Vagina (tissue), 2 donors: ENCODE measurements at regions of chr1 and their contacts with region 1.

Region 1: GRCh38 chr1:204128964-204129896 is 22.6 kb downstream of the ETNK2 start:
- DNase-seq: no peak
- H3K4me3 ChIP-seq: peak overlapping the region; percentile 35 to 43
- H3K27ac ChIP-seq: peak overlapping the region; percentile 78
- H3K4me1 ChIP-seq: peaks cover 59% of the 10 kb centered on the region
- H3K27me3 ChIP-seq: no peaks in the 10 kb centered on the region
- CTCF ChIP-seq: peak; percentile 79 to 99 (median 93)
- POLR2A ChIP-seq: no peak

Region 2: GRCh38 chr1:203871107-203871875 is 257.9 kb before region 1 on chr1:
- intact Hi-C with region 1: loop called (anchors 2 kb)
- DNase-seq: no peak
- H3K4me3 ChIP-seq: no peak overlapping the region
- H3K27ac ChIP-seq: peak overlapping the region; percentile 73
- H3K4me1 ChIP-seq: peaks cover 17% of the 10 kb centered on the region
- H3K27me3 ChIP-seq: no peaks in the 10 kb centered on the region
- CTCF ChIP-seq: peak; percentile 73 to 94 (median 78)
- POLR2A ChIP-seq: no peak

Region 3: DNA sequence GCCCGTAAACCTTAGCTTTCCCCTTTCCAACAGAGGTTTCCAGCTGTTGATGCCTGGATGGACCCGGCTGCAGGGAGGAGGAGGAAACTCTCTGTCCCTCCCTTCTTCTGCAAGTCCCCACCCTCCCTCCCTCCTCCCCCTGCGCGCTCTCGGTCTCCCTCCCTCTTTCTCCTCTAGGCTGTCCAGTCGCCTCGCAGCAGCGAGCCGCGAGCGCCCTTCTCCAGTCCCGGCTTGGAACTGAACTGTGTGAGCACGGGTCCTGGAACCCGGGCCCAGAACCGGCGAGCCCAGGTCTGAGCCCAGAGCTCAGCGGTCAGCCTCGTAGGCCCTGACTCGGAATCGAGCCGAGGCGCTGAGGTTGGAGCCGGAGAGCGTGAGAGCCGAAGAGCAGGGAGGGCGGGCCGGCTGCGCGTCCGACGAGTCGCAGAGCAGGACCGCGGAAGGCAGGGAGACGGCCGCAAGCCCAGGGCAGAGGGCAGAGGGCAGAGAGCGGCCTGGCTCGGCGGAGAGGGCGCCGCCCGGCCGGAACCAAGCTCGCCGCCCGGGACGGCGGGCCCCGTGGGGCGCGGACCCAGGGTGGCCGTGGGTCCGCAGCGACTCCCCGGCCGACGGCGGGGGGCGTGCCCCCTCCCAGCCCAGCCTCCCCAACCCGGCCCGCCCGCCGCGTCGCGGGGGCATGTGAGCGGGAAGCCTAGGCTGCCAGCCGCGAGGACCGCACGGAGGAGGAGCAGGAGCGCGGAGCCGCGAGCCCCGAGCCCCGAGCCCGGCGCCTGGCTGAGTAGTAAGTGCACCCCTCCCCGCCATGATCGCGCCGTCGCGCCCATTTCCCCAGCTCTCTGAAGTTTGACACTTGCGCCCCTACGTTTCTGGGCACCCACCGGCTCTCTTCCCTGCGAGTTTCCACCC is 56.0 kb before region 1 on chr1 and contains the start of gene SOX13:
- intact Hi-C with region 1: loop called (anchors 1 kb)
- DNase-seq: peak in 1 of 2 donors; percentile 97
- H3K4me3 ChIP-seq: peak within 1 kb of the TSS; percentile 84 to 91
- H3K27ac ChIP-seq: peak within 1 kb of the TSS; percentile 97
- H3K4me1 ChIP-seq: peaks cover 38% of the 10 kb centered on the region
- H3K27me3 ChIP-seq: no peaks in the 10 kb centered on the region
- CTCF ChIP-seq: peak in 1 of 3 experiments; percentile 30
- POLR2A ChIP-seq: peak in 1 of 2 donors; percentile 91
- total RNA-seq, gene SOX13: 41.0 TPM

Region 4: GRCh38 chr1:204232526-204232925 is 103.3 kb after region 1 on chr1:
- intact Hi-C with region 1: no loop called
- DNase-seq: no peak
- H3K4me3 ChIP-seq: no peak overlapping the region
- H3K27ac ChIP-seq: no peak overlapping the region
- H3K4me1 ChIP-seq: no peaks in the 10 kb centered on the region
- H3K27me3 ChIP-seq: no peaks in the 10 kb centered on the region
- CTCF ChIP-seq: no peak
- POLR2A ChIP-seq: no peak

Region 5: GRCh38 chr1:204307334-204307883 is 178.2 kb after region 1 on chr1:
- intact Hi-C with region 1: no loop called
- DNase-seq: no peak
- H3K4me3 ChIP-seq: peak overlapping the region in 1 of 2 donors; percentile 8
- H3K27ac ChIP-seq: peak overlapping the region; percentile 56
- H3K4me1 ChIP-seq: peaks cover 8% of the 10 kb centered on the region
- H3K27me3 ChIP-seq: no peaks in the 10 kb centered on the region
- CTCF ChIP-seq: peak in 2 of 3 experiments; percentile 24 to 62
- POLR2A ChIP-seq: no peak